ENCODE measurements at regions of chr10 and their contacts with region 1.

Region 1: GRCh38 chr10:52965938-52966401 is 193.4 kb upstream of the MBL2 start:
- DNase-seq: peak; percentile 92
- ATAC-seq: peak; percentile 96
- H3K4me3 ChIP-seq: no peak overlapping the region
- H3K27ac ChIP-seq: peak overlapping the region; percentile 84
- H3K4me1 ChIP-seq: peaks cover 31% of the 10 kb centered on the region
- H3K27me3 ChIP-seq: no peaks in the 10 kb centered on the region
- CTCF ChIP-seq: no peak
- EP300 ChIP-seq: peak; percentile 85 to 96; a peak in 3 of 4 replicates
- POLR2A ChIP-seq: 0 out of 2 replicates have a peak, but pooled peaks have one; percentile 50
- RAD21 ChIP-seq: no peak

Region 2: GRCh38 chr10:52977581-52977980 is 11.6 kb after region 1 on chr10:
- CTCF ChIA-PET with region 1: interaction called, 3 read pairs
- POLR2A ChIA-PET with region 1: no interaction called
- RAD21 ChIA-PET with region 1: no interaction called
- SMC1A ChIA-PET with region 1: interaction called, 11 read pairs
- in situ Hi-C with region 1: no loop called
- intact Hi-C with region 1: no loop called
- DNase-seq: no peak
- ATAC-seq: no peak
- H3K4me3 ChIP-seq: no peak overlapping the region
- H3K27ac ChIP-seq: no peak overlapping the region
- H3K4me1 ChIP-seq: no peaks in the 10 kb centered on the region
- H3K27me3 ChIP-seq: no peaks in the 10 kb centered on the region
- CTCF ChIP-seq: no peak
- EP300 ChIP-seq: no peak
- POLR2A ChIP-seq: no peak
- RAD21 ChIP-seq: no peak

Region 3: GRCh38 chr10:53003094-53003493 is 37.1 kb after region 1 on chr10:
- CTCF ChIA-PET with region 1: interaction called, 4 read pairs
- POLR2A ChIA-PET with region 1: interaction called, 3 read pairs
- RAD21 ChIA-PET with region 1: interaction called, 21 read pairs
- SMC1A ChIA-PET with region 1: interaction called, 33 read pairs
- in situ Hi-C with region 1: no loop called
- intact Hi-C with region 1: loop called (anchors 5 kb)
- DNase-seq: no peak
- ATAC-seq: peak; percentile 71
- H3K4me3 ChIP-seq: no peak overlapping the region
- H3K27ac ChIP-seq: no peak overlapping the region
- H3K4me1 ChIP-seq: no peaks in the 10 kb centered on the region
- H3K27me3 ChIP-seq: no peaks in the 10 kb centered on the region
- CTCF ChIP-seq: no peak
- EP300 ChIP-seq: no peak
- POLR2A ChIP-seq: no peak
- RAD21 ChIP-seq: no peak

Region 4: DNA sequence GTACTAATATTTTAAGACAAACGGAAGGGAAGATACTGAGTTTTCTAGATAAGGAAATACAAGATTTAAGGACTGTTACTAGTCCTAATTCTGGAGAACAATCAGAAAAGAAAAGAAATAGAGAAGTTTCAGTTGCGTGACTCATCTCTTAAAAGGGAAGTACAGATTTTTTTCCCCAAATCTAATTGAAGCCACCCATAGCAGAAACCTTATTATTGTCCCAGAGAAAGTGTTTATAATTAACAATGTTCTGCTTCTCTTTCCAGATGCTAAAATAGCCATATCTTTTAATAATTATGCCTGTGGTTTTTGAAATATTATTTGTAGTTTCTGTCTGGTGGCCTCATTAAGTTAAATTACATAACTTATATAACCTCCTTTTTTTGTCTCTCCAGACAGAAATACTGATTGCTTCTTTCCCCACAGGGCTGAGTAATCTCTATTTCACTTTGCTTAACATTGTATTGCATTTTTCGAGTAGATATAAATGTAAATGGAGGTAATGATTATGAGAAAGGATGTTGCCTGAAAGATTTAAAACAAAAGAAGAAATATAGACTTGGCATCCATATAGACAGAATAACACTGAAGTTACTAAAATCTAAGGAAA is 47.3 kb after region 1 on chr10:
- CTCF ChIA-PET with region 1: interaction called, 4 read pairs
- POLR2A ChIA-PET with region 1: no interaction called
- RAD21 ChIA-PET with region 1: interaction called, 4 read pairs
- SMC1A ChIA-PET with region 1: interaction called, 33 read pairs
- in situ Hi-C with region 1: no loop called
- intact Hi-C with region 1: loop called (anchors 2 kb)
- DNase-seq: no peak
- ATAC-seq: peak; percentile 84
- H3K4me3 ChIP-seq: no peak overlapping the region
- H3K27ac ChIP-seq: no peak overlapping the region
- H3K4me1 ChIP-seq: peaks cover 14% of the 10 kb centered on the region; the same call in 1 of the 2 replicates
- H3K27me3 ChIP-seq: no peaks in the 10 kb centered on the region
- CTCF ChIP-seq: no peak
- EP300 ChIP-seq: peak; percentile 39 to 56; a peak in 1 of 4 replicates
- POLR2A ChIP-seq: no peak
- RAD21 ChIP-seq: no peak

Region 5: DNA sequence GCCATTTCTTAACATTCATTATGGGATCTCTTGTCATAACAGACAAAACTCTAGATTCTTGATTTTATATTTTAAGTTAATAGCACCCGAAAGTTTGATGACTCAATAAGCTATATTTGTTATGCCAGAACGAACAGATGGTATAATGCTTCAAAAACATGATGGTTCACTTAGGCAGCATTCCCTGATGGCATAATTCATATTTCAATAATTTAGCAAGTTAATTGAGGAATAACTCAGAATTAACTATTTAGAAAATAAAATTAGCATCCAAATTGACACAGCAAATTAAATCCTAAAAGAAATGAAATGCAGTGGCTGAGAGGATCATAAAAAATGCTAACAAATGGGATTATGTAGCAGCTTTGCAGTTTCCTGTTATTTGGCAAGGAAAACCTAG is 67.4 kb after region 1 on chr10:
- CTCF ChIA-PET with region 1: no interaction called
- POLR2A ChIA-PET with region 1: no interaction called
- RAD21 ChIA-PET with region 1: interaction called, 4 read pairs
- SMC1A ChIA-PET with region 1: interaction called, 9 read pairs
- in situ Hi-C with region 1: no loop called
- intact Hi-C with region 1: loop called (anchors 5 kb)
- DNase-seq: no peak
- ATAC-seq: no peak
- H3K4me3 ChIP-seq: no peak overlapping the region
- H3K27ac ChIP-seq: no peak overlapping the region
- H3K4me1 ChIP-seq: no peaks in the 10 kb centered on the region; the same call in 1 of the 2 replicates
- H3K27me3 ChIP-seq: no peaks in the 10 kb centered on the region
- CTCF ChIP-seq: no peak
- EP300 ChIP-seq: no peak
- POLR2A ChIP-seq: no peak
- RAD21 ChIP-seq: no peak

Region 6: DNA sequence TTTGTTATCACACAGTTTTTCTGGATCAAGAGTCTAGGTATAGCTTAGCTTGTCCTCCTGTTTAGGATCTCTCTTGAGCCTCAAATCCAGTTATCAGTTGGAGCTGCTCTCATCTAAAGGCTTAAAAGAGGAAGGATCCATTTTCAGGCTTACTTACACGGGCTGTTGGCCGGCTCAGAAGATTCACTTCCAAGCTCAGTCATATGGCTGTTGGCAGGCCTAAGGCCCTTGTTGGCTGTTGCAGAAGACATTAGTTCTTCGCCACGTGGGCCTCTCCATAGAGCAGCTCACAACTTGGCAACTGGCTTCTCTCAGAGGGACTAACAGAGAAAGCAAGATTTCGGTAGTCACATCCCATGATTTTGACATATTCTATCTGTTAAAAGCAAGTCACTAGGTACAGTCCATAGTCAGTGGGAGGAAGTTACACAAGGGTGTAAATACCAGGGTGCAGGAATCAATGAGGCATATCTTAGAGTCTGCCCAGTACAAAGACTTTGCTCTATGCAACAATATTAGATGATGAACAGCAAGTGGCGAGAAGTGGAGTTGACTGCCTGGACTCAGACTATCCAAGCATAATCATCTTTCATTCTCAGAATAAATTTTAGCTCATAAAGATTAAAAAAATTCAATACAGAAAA is 86.7 kb after region 1 on chr10:
- CTCF ChIA-PET with region 1: no interaction called
- POLR2A ChIA-PET with region 1: no interaction called
- RAD21 ChIA-PET with region 1: interaction called, 3 read pairs
- SMC1A ChIA-PET with region 1: interaction called, 5 read pairs
- in situ Hi-C with region 1: no loop called
- intact Hi-C with region 1: loop called (anchors 5 kb)
- DNase-seq: no peak
- ATAC-seq: no peak; the same call in 2 of the 3 replicates
- H3K4me3 ChIP-seq: no peak overlapping the region
- H3K27ac ChIP-seq: no peak overlapping the region
- H3K4me1 ChIP-seq: no peaks in the 10 kb centered on the region
- H3K27me3 ChIP-seq: no peaks in the 10 kb centered on the region
- CTCF ChIP-seq: no peak
- EP300 ChIP-seq: no peak
- POLR2A ChIP-seq: no peak
- RAD21 ChIP-seq: no peak

Region 7: GRCh38 chr10:53135213-53135896 is 169.4 kb after region 1 on chr10:
- CTCF ChIA-PET with region 1: interaction called, 3 read pairs
- POLR2A ChIA-PET with region 1: interaction called, 4 read pairs
- RAD21 ChIA-PET with region 1: interaction called, 7 read pairs
- SMC1A ChIA-PET with region 1: interaction called, 7 read pairs
- in situ Hi-C with region 1: no loop called
- intact Hi-C with region 1: loop called (anchors 5 kb)
- DNase-seq: no peak
- ATAC-seq: peak; percentile 87
- H3K4me3 ChIP-seq: no peak overlapping the region
- H3K27ac ChIP-seq: no peak overlapping the region
- H3K4me1 ChIP-seq: no peaks in the 10 kb centered on the region
- H3K27me3 ChIP-seq: no peaks in the 10 kb centered on the region; a peak in 1 of 4 replicates
- CTCF ChIP-seq: no peak
- EP300 ChIP-seq: no peak
- POLR2A ChIP-seq: no peak
- RAD21 ChIP-seq: no peak

Region 8: DNA sequence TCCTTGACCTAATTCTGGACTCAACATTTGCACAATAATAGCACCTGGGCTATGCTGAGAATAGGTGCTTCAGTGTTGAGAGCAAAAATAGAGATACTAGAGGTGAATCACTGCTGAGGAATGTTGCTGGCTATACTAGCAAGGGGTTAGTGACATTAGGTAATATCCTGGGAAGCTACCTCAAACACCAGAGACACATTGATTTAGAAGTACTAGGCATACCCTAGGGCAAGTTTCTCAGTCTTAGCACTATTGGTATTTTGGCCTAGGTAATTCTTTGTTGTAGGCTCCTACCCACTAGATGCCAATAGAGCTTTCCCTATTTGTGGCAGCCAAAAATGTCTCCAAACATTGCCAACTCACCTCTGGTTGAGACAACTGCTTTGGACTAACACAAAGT is 290.7 kb after region 1 on chr10:
- CTCF ChIA-PET with region 1: no interaction called
- POLR2A ChIA-PET with region 1: no interaction called
- RAD21 ChIA-PET with region 1: no interaction called
- SMC1A ChIA-PET with region 1: no interaction called
- in situ Hi-C with region 1: no loop called
- intact Hi-C with region 1: no loop called
- DNase-seq: no peak
- ATAC-seq: no peak
- H3K4me3 ChIP-seq: no peak overlapping the region
- H3K27ac ChIP-seq: no peak overlapping the region
- H3K4me1 ChIP-seq: no peaks in the 10 kb centered on the region
- H3K27me3 ChIP-seq: no peaks in the 10 kb centered on the region
- CTCF ChIP-seq: no peak
- EP300 ChIP-seq: no peak
- POLR2A ChIP-seq: no peak
- RAD21 ChIP-seq: no peak

Measured in GM12878 (cell line).